Activated T-helper 2 cell treated with anti-CD3 and anti-CD28 coated beads, Interferon-gamma antibody, Interleukin-2, Interleukin-4, amounts not matched to agents 10 μg/mL and 5 μg/mL and 100 μg/mL, durations not matched to agents 14 hours and 24 hours and 36 hours (primary cell): ENCODE measurements at regions of chr3 and their contacts with region 1.

Region 1: GRCh38 chr3:50298836-50299637 is at the starts of genes HYAL3 and NAA80:
- DNase-seq: peak; percentile 99
- H3K4me3 Mint-ChIP-seq: peak within 1 kb of the TSS; percentile 98
- H3K27ac Mint-ChIP-seq: peak within 1 kb of the TSS; percentile 93
- H3K4me1 Mint-ChIP-seq: peaks cover 17% of the 10 kb centered on the region
- H3K27me3 Mint-ChIP-seq: no peaks in the 10 kb centered on the region
- total RNA-seq, gene HYAL3: 10.8 TPM in 2 replicates
- total RNA-seq, gene NAA80: 24.9 and 25.0 TPM in 2 replicates

Region 2: GRCh38 chr3:49929331-49930240 is 369.5 kb before region 1 on chr3 and contains the start of gene MON1A:
- intact Hi-C with region 1: loop called (anchors 10 kb)
- DNase-seq: peak; percentile 84
- H3K4me3 Mint-ChIP-seq: peak within 1 kb of the TSS; percentile 90
- H3K27ac Mint-ChIP-seq: peak within 1 kb of the TSS; percentile 36
- H3K4me1 Mint-ChIP-seq: peaks cover 16% of the 10 kb centered on the region
- H3K27me3 Mint-ChIP-seq: no peaks in the 10 kb centered on the region
- total RNA-seq, gene MON1A: 15.1 and 15.7 TPM in 2 replicates

Region 3: GRCh38 chr3:50044976-50045375 is 254.1 kb before region 1 on chr3:
- intact Hi-C with region 1: no loop called
- DNase-seq: no peak
- H3K4me3 Mint-ChIP-seq: no peak overlapping the region
- H3K27ac Mint-ChIP-seq: no peak overlapping the region
- H3K4me1 Mint-ChIP-seq: peaks cover 14% of the 10 kb centered on the region
- H3K27me3 Mint-ChIP-seq: no peaks in the 10 kb centered on the region

Region 4: GRCh38 chr3:50245831-50246516 is 53.1 kb before region 1 on chr3:
- intact Hi-C with region 1: loop called (anchors 2 kb)
- DNase-seq: peak; percentile 86
- H3K4me3 Mint-ChIP-seq: peak overlapping the region; percentile 82
- H3K27ac Mint-ChIP-seq: peak overlapping the region; percentile 92
- H3K4me1 Mint-ChIP-seq: peaks cover 62% of the 10 kb centered on the region
- H3K27me3 Mint-ChIP-seq: no peaks in the 10 kb centered on the region

Region 5: DNA sequence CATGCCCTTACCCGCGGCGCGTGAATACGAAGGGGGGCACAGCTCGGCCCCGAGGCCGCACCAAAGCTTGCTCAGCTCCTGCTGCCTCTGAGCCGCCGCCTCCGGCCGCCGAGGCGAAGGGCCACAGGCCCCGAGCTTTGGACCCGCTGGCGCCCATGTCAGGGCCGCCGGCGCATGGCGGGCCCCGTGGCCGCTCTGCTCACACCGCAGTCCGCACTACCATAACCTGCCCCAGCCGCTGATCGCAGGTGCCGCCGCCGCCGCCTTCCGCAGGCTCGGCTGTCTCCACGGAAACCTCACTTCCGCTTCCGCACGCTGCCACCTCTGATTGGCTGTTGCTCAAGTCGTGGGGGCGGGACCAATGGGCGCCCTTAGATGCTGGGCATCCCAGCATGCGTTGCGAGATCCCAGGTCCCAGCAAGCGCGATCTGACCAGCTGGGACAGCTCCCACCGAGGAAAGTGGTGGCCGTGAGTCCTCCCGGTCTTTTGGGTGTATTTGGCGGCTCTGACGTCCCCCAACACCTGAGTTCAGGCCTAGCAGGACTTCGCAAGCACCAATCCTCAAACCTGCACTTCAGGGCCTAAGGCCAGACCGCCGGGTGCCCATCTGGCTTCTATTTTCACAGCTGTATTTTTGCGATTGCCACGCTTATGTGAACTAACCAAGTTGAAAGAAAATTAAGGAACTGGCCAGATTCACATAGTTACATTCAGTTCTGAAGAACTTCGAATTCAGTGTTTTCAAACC is 29.1 kb after region 1 on chr3 and contains the start of gene TUSC2:
- intact Hi-C with region 1: loop called (anchors 2 kb)
- DNase-seq: peak; percentile 93
- H3K4me3 Mint-ChIP-seq: peak within 1 kb of the TSS; percentile 90
- H3K27ac Mint-ChIP-seq: peak within 1 kb of the TSS; percentile 81
- H3K4me1 Mint-ChIP-seq: peaks cover 14% of the 10 kb centered on the region
- H3K27me3 Mint-ChIP-seq: no peaks in the 10 kb centered on the region
- total RNA-seq, gene TUSC2: 23.7 and 23.9 TPM in 2 replicates

Region 6: DNA sequence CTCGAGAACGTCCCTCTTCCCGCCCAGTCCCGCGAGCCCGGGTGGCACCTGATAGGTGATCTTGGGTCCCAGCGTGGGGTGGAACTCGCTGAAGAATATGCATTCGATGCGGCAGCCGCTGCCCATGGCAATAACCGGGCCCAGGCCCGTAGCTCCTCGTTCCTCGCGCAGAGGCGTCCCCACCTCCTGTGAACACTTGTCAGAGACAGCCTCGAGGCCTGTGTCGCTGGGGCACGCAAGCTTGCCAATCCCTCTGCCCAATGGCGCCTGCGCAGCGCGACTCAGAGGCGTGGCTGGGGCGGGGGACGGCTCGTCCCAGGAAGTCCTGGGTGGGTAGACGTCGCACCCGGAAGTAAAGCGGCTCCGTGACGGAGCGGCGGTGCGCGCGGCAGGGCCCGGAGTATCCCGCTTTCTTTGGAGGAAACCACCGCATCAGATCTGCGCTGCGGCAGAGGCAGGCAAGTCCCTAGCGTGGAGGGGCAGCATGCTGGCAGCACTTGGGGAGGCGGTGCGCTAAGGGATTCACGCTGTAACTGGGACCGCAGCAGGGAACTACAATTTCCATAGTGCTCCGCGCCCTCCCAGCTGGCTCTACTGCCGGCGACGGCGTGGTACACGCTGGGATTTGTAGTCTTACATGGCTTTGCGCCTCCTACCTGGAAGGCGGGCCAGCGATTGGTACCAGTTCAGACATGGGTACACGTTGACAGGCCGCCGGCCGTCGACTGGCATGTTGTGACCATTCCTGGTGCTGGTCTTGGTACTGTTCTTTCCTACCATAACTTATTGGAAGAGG is 51.7 kb after region 1 on chr3 and contains the starts of genes CYB561D2 and NPRL2:
- intact Hi-C with region 1: loop called (anchors 2 kb)
- DNase-seq: peak; percentile 99
- H3K4me3 Mint-ChIP-seq: peak within 1 kb of the TSS; percentile 91
- H3K27ac Mint-ChIP-seq: peak within 1 kb of the TSS; percentile 96
- H3K4me1 Mint-ChIP-seq: peaks cover 36% of the 10 kb centered on the region
- H3K27me3 Mint-ChIP-seq: no peaks in the 10 kb centered on the region
- total RNA-seq, gene CYB561D2: 22.9 and 24.6 TPM in 2 replicates
- total RNA-seq, gene NPRL2: 34.5 and 42.7 TPM in 2 replicates